A673 (cell line): ENCODE measurements at regions of chr17 and their contacts with region 1.

Region 1: DNA sequence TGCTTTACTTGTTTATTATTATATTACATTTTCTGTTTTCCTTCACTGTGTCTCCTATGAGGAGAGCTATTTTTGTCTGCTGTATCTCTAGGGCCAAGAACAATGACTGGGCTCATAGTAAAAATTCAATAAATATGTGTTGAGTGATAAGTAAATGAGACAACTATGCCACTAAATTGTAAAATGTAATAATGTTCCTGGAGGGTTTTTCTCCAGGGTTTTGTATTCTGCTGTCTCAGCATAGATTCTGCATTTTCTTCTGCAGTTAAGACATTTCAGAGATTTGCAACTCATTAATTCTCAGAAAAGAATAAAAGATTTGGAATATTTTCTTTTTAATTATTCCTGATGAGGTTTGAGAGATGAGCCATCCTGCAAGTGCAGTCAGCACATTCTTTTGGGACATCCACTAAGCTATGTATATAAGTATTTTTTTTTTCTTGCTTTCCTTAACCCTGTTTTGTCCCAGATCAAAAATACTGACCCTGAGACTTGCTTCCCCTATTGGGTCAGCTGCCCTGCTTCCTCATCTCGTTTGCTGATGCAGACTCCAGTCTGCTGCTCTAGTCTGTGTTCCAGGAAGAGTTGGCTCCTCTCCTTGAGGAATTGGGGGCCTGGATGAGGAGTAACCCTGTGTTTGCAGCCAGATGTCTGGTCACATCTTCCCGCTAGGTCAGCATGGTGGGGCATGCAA is 122.9 kb downstream of the ABCA8 start:
- DNase-seq: peak; percentile 35
- H3K4me3 ChIP-seq: no peak overlapping the region
- H3K27ac ChIP-seq: peak overlapping the region; percentile 92
- H3K4me1 ChIP-seq: peaks cover 47% of the 10 kb centered on the region
- H3K27me3 ChIP-seq: no peaks in the 10 kb centered on the region
- CTCF ChIP-seq: no peak

Region 2: GRCh38 chr17:68794636-68795434 is 37.4 kb before region 1 on chr17:
- CTCF ChIA-PET with region 1: no interaction called
- POLR2A ChIA-PET with region 1: no interaction called
- intact Hi-C with region 1: loop called (anchors 5 kb)
- DNase-seq: peak; percentile 72
- H3K4me3 ChIP-seq: no peak overlapping the region
- H3K27ac ChIP-seq: peak overlapping the region; percentile 72
- H3K4me1 ChIP-seq: peaks cover 29% of the 10 kb centered on the region
- H3K27me3 ChIP-seq: no peaks in the 10 kb centered on the region
- CTCF ChIP-seq: peak; percentile 56

Region 3: GRCh38 chr17:68909066-68909465 is 76.8 kb after region 1 on chr17:
- CTCF ChIA-PET with region 1: interaction called, 3 read pairs
- POLR2A ChIA-PET with region 1: no interaction called
- intact Hi-C with region 1: loop called (anchors 5 kb)
- DNase-seq: peak; percentile 74
- H3K4me3 ChIP-seq: no peak overlapping the region
- H3K27ac ChIP-seq: peak overlapping the region; percentile 77
- H3K4me1 ChIP-seq: peaks cover 22% of the 10 kb centered on the region
- H3K27me3 ChIP-seq: no peaks in the 10 kb centered on the region
- CTCF ChIP-seq: no peak

Region 4: GRCh38 chr17:68981288-68981687 is 149.0 kb after region 1 on chr17:
- CTCF ChIA-PET with region 1: no interaction called
- POLR2A ChIA-PET with region 1: no interaction called
- intact Hi-C with region 1: loop called (anchors 1 kb)
- DNase-seq: peak; percentile 92
- H3K4me3 ChIP-seq: no peak overlapping the region
- H3K27ac ChIP-seq: no peak overlapping the region
- H3K4me1 ChIP-seq: peaks cover 13% of the 10 kb centered on the region
- H3K27me3 ChIP-seq: no peaks in the 10 kb centered on the region
- CTCF ChIP-seq: no peak

Region 5: DNA sequence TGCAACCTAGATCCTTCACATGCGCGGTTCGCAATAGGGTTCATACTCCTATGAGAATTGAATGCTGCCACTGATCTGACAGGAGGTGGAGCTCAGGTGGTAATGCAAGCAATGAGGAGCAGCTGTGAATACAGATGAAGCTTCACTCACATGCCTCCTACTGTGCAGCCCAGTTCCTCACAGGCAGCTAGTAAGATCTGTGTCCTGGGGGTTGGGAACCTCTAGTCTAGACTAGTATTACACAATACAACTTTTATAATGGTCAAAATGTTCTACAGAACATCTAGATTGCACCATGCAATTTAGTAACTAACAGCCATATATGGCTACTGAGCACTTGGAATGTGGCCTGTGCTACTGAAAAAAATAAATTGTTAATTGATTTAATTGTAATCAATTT is 468.0 kb after region 1 on chr17:
- CTCF ChIA-PET with region 1: no interaction called
- POLR2A ChIA-PET with region 1: no interaction called
- intact Hi-C with region 1: loop called (anchors 2 kb)
- DNase-seq: no peak
- H3K4me3 ChIP-seq: no peak overlapping the region
- H3K27ac ChIP-seq: no peak overlapping the region
- H3K4me1 ChIP-seq: no peaks in the 10 kb centered on the region
- H3K27me3 ChIP-seq: no peaks in the 10 kb centered on the region
- CTCF ChIP-seq: no peak